HAP-1 (cell line): ENCODE measurements at regions of chr3 and their contacts with region 1.

Region 1: GRCh38 chr3:24237971-24238767 is 256.5 kb downstream of the THRB start:
- DNase-seq: peak; percentile 68 to 73
- H3K4me3 ChIP-seq: no peak overlapping the region
- H3K4me1 ChIP-seq: peaks cover 15% of the 10 kb centered on the region
- H3K27me3 ChIP-seq: no peaks in the 10 kb centered on the region

Region 2: GRCh38 chr3:23372285-23372684 is 865.9 kb before region 1 on chr3:
- in situ Hi-C with region 1: no loop called
- DNase-seq: no peak
- H3K4me3 ChIP-seq: no peak overlapping the region
- H3K4me1 ChIP-seq: no peaks in the 10 kb centered on the region
- H3K27me3 ChIP-seq: no peaks in the 10 kb centered on the region

Region 3: GRCh38 chr3:23805633-23806533 is 432.3 kb before region 1 on chr3 and contains the start of gene UBE2E1:
- in situ Hi-C with region 1: no loop called
- DNase-seq: peak; percentile 63 to 81
- H3K4me3 ChIP-seq: peak within 1 kb of the TSS; percentile 53
- H3K4me1 ChIP-seq: peaks cover 42% of the 10 kb centered on the region
- H3K27me3 ChIP-seq: no peaks in the 10 kb centered on the region

Region 4: GRCh38 chr3:23900744-23901143 is 337.4 kb before region 1 on chr3:
- in situ Hi-C with region 1: no loop called
- DNase-seq: no peak
- H3K4me3 ChIP-seq: no peak overlapping the region
- H3K4me1 ChIP-seq: no peaks in the 10 kb centered on the region
- H3K27me3 ChIP-seq: no peaks in the 10 kb centered on the region

Region 5: GRCh38 chr3:24004171-24004938 is 233.8 kb before region 1 on chr3:
- in situ Hi-C with region 1: loop called (anchors 10 kb)
- DNase-seq: no peak
- H3K4me3 ChIP-seq: no peak overlapping the region
- H3K4me1 ChIP-seq: peaks cover 18% of the 10 kb centered on the region
- H3K27me3 ChIP-seq: no peaks in the 10 kb centered on the region; the same call in 1 of the 2 replicates

Region 6: GRCh38 chr3:24937228-24937627 is 699.1 kb after region 1 on chr3:
- in situ Hi-C with region 1: no loop called
- DNase-seq: no peak
- H3K4me3 ChIP-seq: no peak overlapping the region
- H3K4me1 ChIP-seq: no peaks in the 10 kb centered on the region; the same call in 1 of the 2 replicates
- H3K27me3 ChIP-seq: no peaks in the 10 kb centered on the region; the same call in 1 of the 2 replicates